ENCODE measurements at regions of chr17 and their contacts with region 1.

Region 1: GRCh38 chr17:78993241-78993956 is 13.7 kb upstream of the LGALS3BP start:
- H3K4me3 ChIP-seq: no peak overlapping the region
- H3K27ac ChIP-seq: no peak overlapping the region
- H3K4me1 ChIP-seq: no peaks in the 10 kb centered on the region
- CTCF ChIP-seq: peak; percentile 70

Region 2: GRCh38 chr17:79003661-79004411 is 10.4 kb after region 1 on chr17:
- CTCF ChIA-PET with region 1: interaction called, 21 read pairs
- POLR2A ChIA-PET with region 1: interaction called, 6 read pairs
- H3K4me3 ChIP-seq: no peak overlapping the region
- H3K27ac ChIP-seq: no peak overlapping the region
- H3K4me1 ChIP-seq: peaks cover 13% of the 10 kb centered on the region
- CTCF ChIP-seq: no peak

Region 3: GRCh38 chr17:79009397-79010308 is 16.3 kb after region 1 on chr17 and contains the start of gene CANT1:
- CTCF ChIA-PET with region 1: interaction called, 21 read pairs
- POLR2A ChIA-PET with region 1: interaction called, 6 read pairs
- H3K4me3 ChIP-seq: peak within 1 kb of the TSS; percentile 93
- H3K27ac ChIP-seq: peak within 1 kb of the TSS; percentile 72
- H3K4me1 ChIP-seq: peaks cover 17% of the 10 kb centered on the region
- CTCF ChIP-seq: no peak

Region 4: GRCh38 chr17:79027925-79028813 is 34.8 kb after region 1 on chr17:
- CTCF ChIA-PET with region 1: interaction called, 12 read pairs
- POLR2A ChIA-PET with region 1: no interaction called
- H3K4me3 ChIP-seq: no peak overlapping the region
- H3K27ac ChIP-seq: no peak overlapping the region
- H3K4me1 ChIP-seq: peaks cover 26% of the 10 kb centered on the region
- CTCF ChIP-seq: peak; percentile 48

Region 5: GRCh38 chr17:79036596-79036995 is 43.2 kb after region 1 on chr17:
- CTCF ChIA-PET with region 1: interaction called, 10 read pairs
- POLR2A ChIA-PET with region 1: no interaction called
- H3K4me3 ChIP-seq: no peak overlapping the region
- H3K27ac ChIP-seq: no peak overlapping the region
- H3K4me1 ChIP-seq: peaks cover 8% of the 10 kb centered on the region; the same call in 1 of the 2 replicates
- CTCF ChIP-seq: no peak

Region 6: DNA sequence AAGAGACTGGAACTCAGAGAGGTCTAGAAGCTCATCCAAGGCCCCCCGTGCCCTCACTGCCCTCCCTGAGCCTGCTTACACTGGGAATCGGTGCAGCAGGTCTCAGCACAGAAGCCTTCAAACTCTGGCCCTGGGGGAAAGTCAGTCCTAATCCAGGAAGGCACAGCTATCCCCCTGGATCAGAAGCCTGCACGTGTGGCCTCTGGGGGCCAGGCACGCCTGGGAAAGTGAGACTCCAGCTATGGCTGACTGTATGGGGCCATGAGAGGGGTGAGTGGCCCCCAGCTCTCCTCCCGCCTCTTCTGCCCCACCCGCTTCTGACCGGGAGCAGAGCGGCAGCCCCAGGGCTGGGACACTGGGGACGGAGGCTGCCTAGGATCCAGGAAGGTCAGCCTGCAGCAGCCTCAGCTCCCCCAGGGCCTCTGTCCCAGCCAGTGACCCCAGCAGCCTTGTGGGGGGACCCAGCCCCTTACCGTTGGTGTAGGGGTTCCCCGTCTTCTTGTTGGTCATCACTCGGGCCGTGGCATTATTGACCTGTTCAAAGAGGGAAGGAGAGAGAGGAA is 107.8 kb after region 1 on chr17:
- CTCF ChIA-PET with region 1: no interaction called
- POLR2A ChIA-PET with region 1: no interaction called
- H3K4me3 ChIP-seq: no peak overlapping the region
- H3K27ac ChIP-seq: no peak overlapping the region
- H3K4me1 ChIP-seq: no peaks in the 10 kb centered on the region
- CTCF ChIP-seq: no peak